A673 (cell line): ENCODE measurements at regions of chr11 and their contacts with region 1.

Region 1: GRCh38 chr11:45879803-45880686 is 5.4 kb upstream of the MAPK8IP1 start:
- DNase-seq: peak; percentile 99
- H3K4me3 ChIP-seq: no peak overlapping the region
- H3K27ac ChIP-seq: peak overlapping the region; percentile 58
- H3K4me1 ChIP-seq: peaks cover 25% of the 10 kb centered on the region
- H3K27me3 ChIP-seq: no peaks in the 10 kb centered on the region
- CTCF ChIP-seq: no peak

Region 2: DNA sequence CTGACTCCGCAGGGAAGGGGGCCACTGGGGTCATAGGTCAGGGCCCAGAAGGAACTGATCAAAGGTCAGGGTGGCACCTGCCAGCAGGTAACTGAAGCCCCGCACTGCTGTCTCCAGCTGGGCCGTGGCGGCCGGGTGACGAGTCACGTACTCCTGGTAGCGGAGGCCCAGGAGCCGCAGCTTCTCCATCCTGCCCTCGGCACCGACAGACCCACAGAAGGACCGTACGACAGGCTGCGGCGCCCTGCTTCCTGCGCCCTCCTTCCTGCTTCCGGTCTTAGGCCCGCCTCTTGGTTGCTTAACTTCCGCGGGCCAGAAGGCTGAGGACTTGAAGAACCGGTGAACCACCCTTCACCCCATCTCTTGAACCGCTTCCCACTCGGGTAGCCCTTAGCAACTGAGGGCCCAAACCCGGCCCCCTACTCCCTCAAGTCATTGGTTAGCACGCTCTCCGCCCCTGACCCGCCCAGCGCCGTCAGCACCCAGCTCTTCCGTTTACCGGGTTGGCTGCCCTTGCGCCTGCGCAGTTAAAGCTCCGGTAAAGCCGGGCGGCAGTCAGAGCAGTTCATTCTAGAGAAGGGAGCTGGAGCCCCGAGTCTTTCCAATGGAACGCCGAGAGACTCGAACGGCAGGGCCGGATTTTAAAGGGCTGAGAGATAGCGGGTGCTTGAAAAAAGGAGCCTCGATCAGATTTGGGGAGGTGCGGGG is 37.7 kb after region 1 on chr11 and contains the start of gene PEX16:
- CTCF ChIA-PET with region 1: no interaction called
- POLR2A ChIA-PET with region 1: no interaction called
- intact Hi-C with region 1: loop called (anchors 2 kb)
- DNase-seq: peak; percentile 100
- H3K4me3 ChIP-seq: peak within 1 kb of the TSS; percentile 71
- H3K27ac ChIP-seq: peak within 1 kb of the TSS; percentile 87
- H3K4me1 ChIP-seq: peaks cover 9% of the 10 kb centered on the region
- H3K27me3 ChIP-seq: no peaks in the 10 kb centered on the region
- CTCF ChIP-seq: no peak
- total RNA-seq, gene PEX16: 64.1 and 68.9 TPM in 2 replicates

Region 3: DNA sequence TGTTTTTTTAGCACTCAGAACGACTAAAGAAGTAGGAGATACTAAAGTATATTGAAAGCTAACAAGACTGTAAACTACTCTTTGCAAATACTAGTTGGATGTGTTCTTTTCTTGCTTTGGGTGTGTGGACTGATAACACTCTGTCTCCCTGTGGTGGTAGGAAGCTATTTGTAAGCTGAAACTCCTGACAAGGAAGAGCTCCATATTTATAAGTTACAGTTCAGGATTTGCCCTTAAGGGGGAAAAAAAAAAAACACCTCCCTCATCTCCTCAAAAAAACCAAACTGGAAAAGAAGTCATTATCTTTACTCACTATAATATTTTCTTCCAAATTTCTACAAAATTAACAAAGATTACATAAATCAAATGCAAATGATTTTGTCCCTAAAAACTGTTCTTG is 137.3 kb after region 1 on chr11:
- CTCF ChIA-PET with region 1: no interaction called
- POLR2A ChIA-PET with region 1: no interaction called
- intact Hi-C with region 1: no loop called
- DNase-seq: no peak
- H3K4me3 ChIP-seq: no peak overlapping the region
- H3K27ac ChIP-seq: no peak overlapping the region
- H3K4me1 ChIP-seq: no peaks in the 10 kb centered on the region
- H3K27me3 ChIP-seq: no peaks in the 10 kb centered on the region
- CTCF ChIP-seq: no peak